ENCODE measurements at regions of chr16 and their contacts with region 1.

Region 1: DNA sequence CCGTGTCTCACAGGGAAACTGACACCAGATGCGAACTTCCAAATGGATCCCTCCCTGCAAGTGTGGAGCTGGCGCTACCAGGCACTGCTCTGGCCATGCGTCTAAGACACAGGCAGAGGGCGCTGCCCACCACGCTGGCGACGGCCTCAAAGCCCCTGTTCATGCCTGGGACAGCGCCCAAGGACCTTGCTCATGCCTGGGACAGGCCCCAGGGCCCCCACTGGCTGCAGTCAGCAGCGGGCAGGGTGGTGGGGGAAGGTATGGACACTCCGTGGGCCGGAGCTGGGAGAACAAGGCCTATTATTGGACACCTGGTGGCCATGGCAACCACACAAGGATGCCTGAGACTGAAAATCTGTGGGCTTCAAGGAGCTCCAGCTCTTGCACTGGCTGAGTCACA is 8.8 kb downstream of the ZG16B start:
- DNase-seq: peak; percentile 90
- H3K4me3 ChIP-seq: no peak overlapping the region
- H3K27ac ChIP-seq: no peak overlapping the region
- H3K4me1 ChIP-seq: peaks cover 0 to 4% of the 10 kb centered on the region in 2 experiments; a peak in 1 of 4 replicates
- H3K27me3 ChIP-seq: no peaks in the 10 kb centered on the region
- CTCF ChIP-seq: peak; percentile 79
- EP300 ChIP-seq: no peak
- RAD21 ChIP-seq: peak; percentile 86

Region 2: GRCh38 chr16:2739625-2740435 is 99.1 kb before region 1 on chr16:
- CTCF ChIA-PET with region 1: no interaction called
- POLR2A ChIA-PET with region 1: no interaction called
- DNase-seq: no peak
- H3K4me3 ChIP-seq: no peak overlapping the region
- H3K27ac ChIP-seq: no peak overlapping the region
- H3K4me1 ChIP-seq: no peaks in the 10 kb centered on the region; a peak in 1 of 4 replicates
- H3K27me3 ChIP-seq: no peaks in the 10 kb centered on the region
- CTCF ChIP-seq: no peak
- EP300 ChIP-seq: no peak
- RAD21 ChIP-seq: no peak

Region 3: GRCh38 chr16:2821487-2822157 is 17.3 kb before region 1 on chr16:
- CTCF ChIA-PET with region 1: interaction called, 13 read pairs
- POLR2A ChIA-PET with region 1: no interaction called
- DNase-seq: peak; percentile 66
- H3K4me3 ChIP-seq: no peak overlapping the region
- H3K27ac ChIP-seq: peak overlapping the region in 1 of 2 experiments; percentile 74; a peak in 2 of 4 replicates
- H3K4me1 ChIP-seq: peaks cover 0 to 24% of the 10 kb centered on the region in 2 experiments; a peak in 1 of 4 replicates
- H3K27me3 ChIP-seq: no peaks in the 10 kb centered on the region
- CTCF ChIP-seq: no peak
- EP300 ChIP-seq: peak in 1 of 2 experiments; percentile 33; a peak in 1 of 4 replicates
- RAD21 ChIP-seq: peak; percentile 5; the same call in 1 of the 2 replicates

Region 4: DNA sequence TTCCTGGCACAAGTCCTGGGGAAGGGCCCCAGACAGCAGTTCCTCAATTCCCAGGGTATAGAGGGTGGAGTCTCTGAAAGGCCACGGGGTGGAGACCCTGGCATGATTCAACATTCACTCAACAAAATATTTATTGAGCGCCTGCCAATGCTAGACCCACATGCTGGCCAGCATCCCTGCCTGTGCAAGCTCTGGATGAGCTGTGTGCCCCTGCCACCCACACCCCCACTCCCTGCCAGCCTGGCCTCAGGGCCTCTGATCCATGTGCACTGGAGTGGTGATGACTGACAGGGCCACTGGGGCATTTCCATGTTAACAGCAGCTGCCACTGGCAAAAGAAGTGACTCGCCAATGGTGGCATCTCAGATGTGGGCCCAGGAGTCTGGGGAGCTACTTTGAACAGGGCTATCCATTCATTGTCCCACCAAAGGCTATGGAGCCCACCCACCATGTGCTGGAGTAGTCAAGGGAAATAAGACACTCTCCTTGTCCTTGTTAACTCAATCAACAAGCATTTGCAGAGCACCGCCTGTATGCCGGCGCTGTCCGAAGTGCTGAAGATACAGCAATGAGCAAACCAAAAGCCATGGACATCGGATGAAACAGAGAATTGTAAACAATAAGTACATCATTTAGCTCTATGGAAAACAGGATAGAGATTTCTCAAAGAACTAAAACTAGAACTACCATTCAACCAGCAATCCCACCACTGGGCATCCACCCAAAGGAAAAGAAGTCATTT is 22.1 kb after region 1 on chr16:
- CTCF ChIA-PET with region 1: interaction called, 144 read pairs
- POLR2A ChIA-PET with region 1: no interaction called
- DNase-seq: no peak
- H3K4me3 ChIP-seq: no peak overlapping the region
- H3K27ac ChIP-seq: no peak overlapping the region
- H3K4me1 ChIP-seq: no peaks in the 10 kb centered on the region; a peak in 1 of 4 replicates
- H3K27me3 ChIP-seq: no peaks in the 10 kb centered on the region; the same call in 1 of the 2 replicates
- CTCF ChIP-seq: no peak
- EP300 ChIP-seq: no peak
- RAD21 ChIP-seq: no peak

Region 5: GRCh38 chr16:2911580-2912329 is 72.8 kb after region 1 on chr16 and contains the start of gene FLYWCH1:
- CTCF ChIA-PET with region 1: interaction called, 16 read pairs
- POLR2A ChIA-PET with region 1: no interaction called
- DNase-seq: peak; percentile 97
- H3K4me3 ChIP-seq: peak within 1 kb of the TSS; percentile 65 to 96
- H3K27ac ChIP-seq: peak within 1 kb of the TSS; percentile 53 to 65; a peak in 3 of 4 replicates
- H3K4me1 ChIP-seq: peaks cover 7 to 17% of the 10 kb centered on the region in 2 experiments; a peak in 3 of 4 replicates
- H3K27me3 ChIP-seq: no peaks in the 10 kb centered on the region
- CTCF ChIP-seq: no peak
- EP300 ChIP-seq: no peak
- RAD21 ChIP-seq: no peak
- polyA plus RNA-seq, gene FLYWCH1: 22.4 and 30.1 TPM in 2 replicates

Region 6: DNA sequence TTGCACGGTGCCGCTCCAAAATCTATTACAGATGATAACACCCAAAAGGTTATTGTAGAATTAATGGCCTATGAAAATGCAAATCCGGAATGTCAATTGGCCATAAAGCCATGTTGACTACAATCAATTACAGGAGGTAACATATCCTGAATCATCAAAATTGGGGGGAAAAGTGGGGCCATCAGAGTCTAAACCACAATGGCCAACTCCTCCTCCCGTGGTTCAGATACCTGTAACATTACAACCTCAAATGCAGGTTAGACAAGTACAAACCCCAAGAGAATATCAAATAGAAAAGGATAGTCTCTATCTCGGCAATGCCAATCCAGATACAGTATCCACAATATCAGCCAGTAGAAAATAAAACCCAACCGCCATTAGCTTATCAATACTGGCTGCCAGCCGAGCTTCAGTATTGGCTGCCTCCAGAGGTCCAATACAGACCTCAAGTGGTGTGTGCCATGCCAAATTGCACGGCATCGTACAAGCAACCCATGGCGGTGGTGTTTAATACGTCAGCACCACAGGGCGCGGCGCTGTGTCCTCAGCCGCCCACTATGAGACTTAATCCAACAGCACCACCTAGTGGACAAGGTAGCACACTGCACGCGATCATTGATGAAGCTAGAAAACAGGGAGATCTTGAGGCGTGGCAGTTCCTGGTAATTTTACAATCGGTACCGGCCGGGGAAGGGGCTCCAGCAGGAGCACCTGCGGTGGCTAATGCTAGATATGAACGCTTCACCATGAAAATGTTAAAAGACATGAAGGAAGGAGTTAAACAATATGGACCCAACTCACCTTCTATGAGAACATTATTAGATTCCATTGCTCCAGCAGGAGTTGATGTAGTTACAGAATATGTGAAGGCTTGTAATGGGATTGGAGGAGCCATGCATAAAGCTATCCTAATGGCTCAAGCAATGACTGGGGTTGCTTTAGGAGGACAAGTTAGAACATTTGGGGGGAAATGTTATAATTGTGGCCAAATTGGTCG is 88.0 kb after region 1 on chr16:
- CTCF ChIA-PET with region 1: interaction called, 25 read pairs
- POLR2A ChIA-PET with region 1: no interaction called
- DNase-seq: peak; percentile 86
- H3K4me3 ChIP-seq: peak overlapping the region in 1 of 2 experiments; percentile 37; a peak in 1 of 4 replicates
- H3K27ac ChIP-seq: no peak overlapping the region
- H3K4me1 ChIP-seq: peaks cover 0 to 5% of the 10 kb centered on the region in 2 experiments; a peak in 1 of 4 replicates
- H3K27me3 ChIP-seq: no peaks in the 10 kb centered on the region
- CTCF ChIP-seq: peak; percentile 94
- EP300 ChIP-seq: no peak
- RAD21 ChIP-seq: peak; percentile 85

Measured in SK-N-SH (cell line).